ENCODE measurements at regions of chr1 and their contacts with region 1.

Region 1: GRCh38 chr1:171794085-171794484 is 12.6 kb downstream of the METTL13 start:
- DNase-seq: peak; percentile 77
- ATAC-seq: peak; percentile 100
- H3K4me3 Mint-ChIP-seq: no peak overlapping the region
- H3K27ac Mint-ChIP-seq: peak overlapping the region; percentile 95
- H3K4me1 Mint-ChIP-seq: peaks cover 27% of the 10 kb centered on the region
- H3K27me3 Mint-ChIP-seq: no peaks in the 10 kb centered on the region

Region 2: GRCh38 chr1:171595324-171595723 is 198.8 kb before region 1 on chr1:
- CTCF ChIA-PET with region 1: no interaction called
- POLR2A ChIA-PET with region 1: no interaction called
- intact Hi-C with region 1: loop called in 1 of 2 experiments (anchors 5 kb)
- DNase-seq: no peak
- ATAC-seq: peak; percentile 39
- H3K4me3 Mint-ChIP-seq: no peak overlapping the region
- H3K27ac Mint-ChIP-seq: no peak overlapping the region
- H3K4me1 Mint-ChIP-seq: no peaks in the 10 kb centered on the region
- H3K27me3 Mint-ChIP-seq: no peaks in the 10 kb centered on the region

Region 3: DNA sequence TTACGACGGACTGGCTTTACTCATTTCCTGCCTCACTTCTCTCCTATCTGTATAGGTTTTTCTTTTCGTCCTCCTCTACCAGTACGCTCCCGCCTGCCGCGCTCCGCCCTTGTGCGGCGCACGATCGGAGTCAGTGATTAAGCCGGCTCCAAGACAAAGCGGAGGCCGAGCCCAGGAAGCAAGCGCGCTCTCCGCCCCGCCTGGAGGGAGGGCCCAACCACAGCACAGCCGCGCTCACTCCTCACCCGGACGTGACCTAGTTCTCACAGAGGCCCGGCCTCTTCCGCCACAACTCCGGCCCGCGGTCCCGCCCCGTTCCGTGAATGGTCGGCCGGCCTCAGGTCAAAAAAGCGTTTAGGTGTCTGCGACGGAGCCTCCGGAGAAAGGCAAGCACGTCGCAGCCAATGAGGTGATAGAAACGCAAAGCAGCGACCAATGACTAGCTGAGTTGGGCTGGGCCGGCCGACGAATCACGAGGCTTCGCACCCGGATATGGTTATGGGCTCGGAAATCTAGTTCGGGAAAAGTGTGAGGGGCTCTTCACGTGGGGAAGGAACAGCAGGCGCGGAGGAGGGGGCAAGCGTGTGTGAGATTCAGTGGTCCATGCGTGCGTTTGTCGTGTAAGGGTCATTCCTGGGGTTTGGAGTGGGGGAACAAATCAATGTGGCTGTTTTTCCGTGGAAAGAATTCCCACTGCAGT is 12.8 kb before region 1 on chr1 and contains the start of gene METTL13:
- CTCF ChIA-PET with region 1: interaction called, 5 read pairs
- POLR2A ChIA-PET with region 1: no interaction called
- intact Hi-C with region 1: loop called (anchors 1 kb)
- DNase-seq: peak; percentile 99
- ATAC-seq: peak; percentile 97
- H3K4me3 Mint-ChIP-seq: peak within 1 kb of the TSS; percentile 92
- H3K27ac Mint-ChIP-seq: peak within 1 kb of the TSS; percentile 97
- H3K4me1 Mint-ChIP-seq: peaks cover 57% of the 10 kb centered on the region
- H3K27me3 Mint-ChIP-seq: no peaks in the 10 kb centered on the region
- total RNA-seq, gene METTL13: 41.1 to 52.9 TPM

Region 4: DNA sequence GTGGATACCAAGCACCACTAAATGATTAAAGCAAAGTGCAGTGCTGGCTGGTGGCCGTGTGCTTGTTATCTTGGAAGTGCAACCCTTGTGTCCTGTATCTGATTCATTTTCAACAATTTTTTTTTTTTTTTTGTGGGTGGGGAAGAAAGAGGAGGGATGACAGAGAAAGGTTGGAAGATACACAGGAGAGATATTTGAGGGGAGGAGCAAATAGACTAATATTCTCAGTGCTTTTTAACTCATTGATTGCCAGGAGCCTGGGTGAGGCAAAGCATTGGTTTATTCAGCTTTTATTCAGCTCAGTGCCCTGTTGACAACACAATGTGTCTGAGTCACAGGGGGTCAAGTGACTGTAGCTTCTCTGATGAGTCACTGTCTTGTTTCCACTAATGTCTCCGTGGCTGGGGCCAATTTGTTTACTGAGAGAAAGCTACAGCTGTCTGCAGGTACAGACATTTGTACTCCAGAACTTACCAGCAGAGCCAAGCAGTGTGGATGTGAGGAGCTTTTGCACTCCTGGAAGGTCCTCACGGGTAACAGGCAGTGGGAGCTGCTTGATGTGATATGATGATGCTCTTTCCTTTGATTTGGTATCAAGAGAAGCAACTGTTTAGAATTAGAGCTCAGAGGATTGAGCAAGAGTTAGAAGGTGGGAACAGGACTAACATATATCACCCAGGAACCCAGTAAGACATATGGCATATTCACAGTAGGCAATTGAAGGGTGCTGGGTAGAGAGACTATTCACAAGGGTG is 23.6 kb after region 1 on chr1:
- CTCF ChIA-PET with region 1: no interaction called
- POLR2A ChIA-PET with region 1: no interaction called
- intact Hi-C with region 1: loop called in 1 of 2 experiments (anchors 1 kb)
- DNase-seq: peak; percentile 73
- ATAC-seq: peak; percentile 98
- H3K4me3 Mint-ChIP-seq: no peak overlapping the region
- H3K27ac Mint-ChIP-seq: peak overlapping the region; percentile 87
- H3K4me1 Mint-ChIP-seq: peaks cover 17% of the 10 kb centered on the region
- H3K27me3 Mint-ChIP-seq: no peaks in the 10 kb centered on the region

Region 5: GRCh38 chr1:171841050-171841940 is 47.2 kb after region 1 on chr1 and contains the start of gene DNM3:
- CTCF ChIA-PET with region 1: no interaction called
- POLR2A ChIA-PET with region 1: no interaction called
- intact Hi-C with region 1: loop called in 1 of 2 experiments (anchors 1 kb)
- DNase-seq: peak; percentile 85
- ATAC-seq: peak; percentile 97
- H3K4me3 Mint-ChIP-seq: peak within 1 kb of the TSS; percentile 84
- H3K27ac Mint-ChIP-seq: peak within 1 kb of the TSS; percentile 77
- H3K4me1 Mint-ChIP-seq: peaks cover 14% of the 10 kb centered on the region
- H3K27me3 Mint-ChIP-seq: peaks cover 17% of the 10 kb centered on the region
- total RNA-seq, gene DNM3: 1.1 to 1.4 TPM

Measured in activated CD4-positive, alpha-beta T cell treated with anti-CD3 and anti-CD28 coated beads for 36 hours (primary cell).